BJ (cell line): ENCODE measurements at regions of chr17 and their contacts with region 1.

Region 1: DNA sequence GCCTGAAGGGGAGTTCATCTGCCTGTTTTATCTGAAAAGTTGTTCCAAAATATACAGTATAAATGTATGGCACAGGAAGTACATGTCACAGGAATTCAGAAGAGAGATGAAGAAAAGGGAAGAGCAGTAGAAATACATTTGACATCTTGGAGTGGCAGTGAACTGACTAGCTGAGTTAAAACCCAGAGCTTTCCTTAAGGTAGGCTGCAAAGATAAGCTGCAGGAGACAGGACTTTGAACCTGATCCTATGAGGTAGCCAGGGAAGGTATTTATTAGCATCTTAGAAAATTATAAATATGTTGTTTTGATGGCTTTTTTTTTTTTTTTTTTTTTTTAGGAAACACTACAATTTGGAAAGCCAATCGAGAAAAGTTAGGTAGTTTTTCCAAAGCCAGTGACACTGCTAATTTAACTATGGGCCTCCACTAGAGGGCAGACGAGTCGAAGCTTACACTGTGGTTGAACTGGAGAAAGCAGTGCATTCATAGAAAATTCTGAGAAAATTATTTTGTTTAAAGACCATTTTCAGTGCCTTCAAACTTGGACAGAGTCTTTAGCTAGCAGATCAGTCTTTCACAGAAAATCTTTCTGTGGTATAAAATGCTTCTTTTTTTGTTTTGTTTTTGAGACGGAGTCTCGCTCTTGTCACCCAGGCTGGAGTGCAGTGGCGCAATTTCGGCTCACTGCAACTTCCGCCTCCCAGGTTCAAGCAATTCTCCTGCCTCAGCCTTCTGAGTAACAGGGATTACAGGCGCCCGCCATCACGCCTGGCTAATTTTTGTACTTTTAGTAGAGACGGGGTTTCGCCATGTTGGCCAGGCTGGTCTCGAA is 122.3 kb downstream of the SSH2 start:
- DNase-seq: no peak
- H3K4me3 ChIP-seq: no peak overlapping the region
- H3K27me3 ChIP-seq: no peaks in the 10 kb centered on the region
- CTCF ChIP-seq: peak; percentile 73

Region 2: DNA sequence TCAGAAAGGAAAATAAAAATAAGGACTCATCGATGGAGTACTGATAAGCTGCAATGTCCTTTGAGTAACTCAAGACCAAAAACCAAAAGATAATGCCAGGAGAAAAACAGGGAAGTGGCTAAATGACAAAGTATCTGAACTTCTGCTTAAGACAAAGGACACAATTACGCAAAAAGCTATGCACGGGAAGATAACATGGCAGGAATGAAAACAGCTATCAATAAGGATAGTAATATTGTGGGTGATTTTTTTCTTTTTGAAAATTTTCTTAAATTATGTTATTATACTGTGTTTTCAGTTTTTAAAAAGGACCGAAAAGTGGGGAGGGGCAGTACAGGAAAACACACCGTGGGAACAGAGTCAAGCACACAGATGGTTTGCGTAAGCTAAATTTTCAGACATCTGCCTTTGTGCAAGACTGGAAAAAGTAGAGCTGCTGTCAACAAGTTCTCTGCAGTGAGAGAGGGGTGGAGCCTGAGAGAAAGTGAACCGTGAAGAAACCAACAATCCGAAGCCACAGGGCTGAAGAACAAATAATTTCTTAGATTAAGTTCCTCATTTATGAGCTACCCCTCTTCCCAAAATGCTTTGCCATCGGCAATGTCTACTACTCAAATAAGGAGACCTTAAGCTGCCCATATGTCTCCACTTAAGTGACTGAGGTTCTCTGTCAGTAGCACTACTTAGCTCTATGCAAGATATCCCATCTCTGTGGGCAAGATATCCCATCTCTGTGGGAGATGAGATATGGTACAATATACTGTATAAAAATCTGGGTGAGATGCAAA is 85.1 kb before region 1 on chr17:
- CTCF ChIA-PET with region 1: no interaction called
- POLR2A ChIA-PET with region 1: no interaction called
- DNase-seq: peak; percentile 57
- H3K4me3 ChIP-seq: peak overlapping the region; percentile 2; the same call in 1 of the 2 replicates
- H3K27me3 ChIP-seq: no peaks in the 10 kb centered on the region
- CTCF ChIP-seq: no peak

Region 3: DNA sequence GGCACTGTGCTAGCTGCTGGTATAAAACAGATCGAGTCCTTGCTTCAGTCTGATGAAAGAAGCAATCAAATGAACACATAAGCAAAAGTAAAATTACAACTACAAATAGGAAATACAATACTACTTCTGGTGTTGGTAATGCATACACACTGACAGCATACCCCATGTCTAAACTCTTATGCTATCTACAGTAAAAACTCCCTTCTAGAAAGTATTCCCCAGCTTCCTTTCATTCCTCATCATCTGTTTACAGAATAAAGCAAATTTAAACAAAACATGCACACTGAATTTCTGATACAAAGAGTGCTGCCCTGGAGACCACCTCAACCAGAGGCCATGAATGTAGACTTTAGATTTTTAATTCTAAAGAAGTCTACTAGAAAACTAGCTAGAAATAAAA is 12.7 kb after region 1 on chr17:
- CTCF ChIA-PET with region 1: interaction called, 12 read pairs
- POLR2A ChIA-PET with region 1: no interaction called
- DNase-seq: no peak
- H3K4me3 ChIP-seq: no peak overlapping the region
- H3K27me3 ChIP-seq: no peaks in the 10 kb centered on the region
- CTCF ChIP-seq: no peak

Region 4: DNA sequence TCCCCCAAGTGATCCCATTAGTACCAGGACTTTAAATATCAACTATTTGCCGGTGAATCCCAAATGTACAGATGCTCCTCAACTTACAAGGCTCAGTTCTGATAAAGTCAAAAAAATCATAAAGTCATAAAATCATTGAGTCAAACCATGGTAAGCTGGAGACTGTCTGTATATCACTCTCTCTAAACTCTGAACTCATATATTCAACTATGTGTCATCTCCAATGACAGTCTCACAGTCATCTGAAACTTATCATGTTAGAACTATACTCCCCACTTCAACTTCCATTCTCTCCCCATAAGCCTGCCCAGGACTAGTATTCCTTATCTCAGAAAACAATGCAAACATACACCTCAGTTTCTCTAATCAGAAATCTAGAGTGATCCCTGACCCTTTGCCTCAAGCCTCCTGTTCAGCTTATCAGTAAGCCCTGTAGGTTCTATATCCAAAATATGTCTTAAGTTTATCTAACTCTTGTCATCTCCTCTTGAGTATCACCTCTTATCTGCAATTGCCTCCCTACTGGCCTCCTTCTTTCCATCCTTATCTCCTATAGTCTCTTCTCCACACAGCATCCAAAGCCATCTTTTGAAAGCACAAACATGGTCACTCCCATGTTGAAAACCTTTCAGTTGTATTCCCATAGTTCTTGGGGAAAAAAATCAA is 67.3 kb after region 1 on chr17:
- CTCF ChIA-PET with region 1: no interaction called
- POLR2A ChIA-PET with region 1: no interaction called
- DNase-seq: no peak
- H3K4me3 ChIP-seq: no peak overlapping the region
- H3K27me3 ChIP-seq: no peaks in the 10 kb centered on the region
- CTCF ChIP-seq: no peak

Region 5: DNA sequence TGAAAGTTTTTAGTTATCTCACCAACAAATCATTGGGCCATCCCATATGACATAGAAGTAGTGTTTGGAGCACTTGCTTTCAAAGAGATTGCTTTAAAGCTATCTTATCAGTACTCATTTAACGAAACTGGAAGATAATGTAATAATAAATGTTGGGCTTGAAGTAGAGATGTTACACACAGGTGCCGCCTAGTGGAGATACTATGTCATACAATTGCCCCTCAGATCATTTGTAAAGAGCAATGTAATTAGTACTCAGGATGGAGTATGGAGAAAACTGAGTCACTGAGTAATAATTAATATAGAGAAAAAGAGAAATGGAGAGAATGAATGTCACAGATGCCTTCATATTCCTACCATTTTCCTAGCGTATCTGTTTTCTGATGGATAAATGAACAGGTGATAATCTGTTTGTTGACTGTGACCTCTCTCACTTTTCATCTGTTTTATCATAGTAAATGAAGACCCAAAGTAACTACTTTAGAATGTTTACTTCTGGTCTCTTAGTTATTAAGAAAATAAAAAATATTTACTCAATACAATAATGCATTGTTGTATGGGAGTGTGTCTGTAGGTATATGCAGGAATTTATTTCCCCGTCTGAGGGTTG is 214.1 kb after region 1 on chr17:
- CTCF ChIA-PET with region 1: interaction called, 13 read pairs
- POLR2A ChIA-PET with region 1: no interaction called
- DNase-seq: no peak
- H3K4me3 ChIP-seq: no peak overlapping the region
- H3K27me3 ChIP-seq: no peaks in the 10 kb centered on the region
- CTCF ChIP-seq: peak; percentile 81